ENCODE measurements at regions of chr15 and their contacts with region 1.

Region 1: DNA sequence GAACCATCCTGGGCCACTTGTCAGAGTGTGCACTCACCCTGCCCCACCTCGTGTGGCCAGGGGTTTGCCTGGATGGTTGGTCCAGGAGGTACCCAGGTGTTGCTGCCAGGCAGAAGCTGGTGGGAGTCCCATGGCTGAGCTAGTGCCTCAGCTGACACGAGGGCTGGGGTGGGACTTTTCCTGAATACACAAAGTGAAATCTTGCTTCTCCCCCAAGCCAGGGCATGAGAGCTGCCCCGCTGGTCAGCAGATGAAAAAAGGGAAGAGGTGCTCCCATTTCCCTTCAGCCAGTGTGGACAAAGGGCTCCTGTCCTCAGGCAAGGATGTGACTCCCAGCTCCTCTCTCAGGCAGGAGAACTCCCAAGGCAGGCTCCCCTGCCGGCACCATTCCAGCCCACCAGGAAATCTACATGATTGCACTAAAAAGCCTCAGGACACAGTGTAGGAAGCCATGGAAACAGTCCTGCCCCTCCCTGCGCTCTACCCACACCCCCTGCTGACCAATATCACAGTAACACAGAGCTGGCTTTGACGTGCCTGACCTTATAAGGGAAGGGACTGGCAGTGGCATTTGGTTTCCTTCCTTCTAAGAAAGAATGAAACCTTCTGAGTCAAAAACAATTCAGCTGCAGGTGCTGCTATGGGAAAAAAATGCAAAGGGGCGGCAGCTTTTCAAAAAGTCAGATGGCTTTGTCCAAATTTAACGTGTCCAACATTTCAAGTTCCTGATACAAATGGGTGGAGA is 33.9 kb downstream of the MYO5C start:
- DNase-seq: peak; percentile 86
- CTCF ChIP-seq: no peak

Region 2: DNA sequence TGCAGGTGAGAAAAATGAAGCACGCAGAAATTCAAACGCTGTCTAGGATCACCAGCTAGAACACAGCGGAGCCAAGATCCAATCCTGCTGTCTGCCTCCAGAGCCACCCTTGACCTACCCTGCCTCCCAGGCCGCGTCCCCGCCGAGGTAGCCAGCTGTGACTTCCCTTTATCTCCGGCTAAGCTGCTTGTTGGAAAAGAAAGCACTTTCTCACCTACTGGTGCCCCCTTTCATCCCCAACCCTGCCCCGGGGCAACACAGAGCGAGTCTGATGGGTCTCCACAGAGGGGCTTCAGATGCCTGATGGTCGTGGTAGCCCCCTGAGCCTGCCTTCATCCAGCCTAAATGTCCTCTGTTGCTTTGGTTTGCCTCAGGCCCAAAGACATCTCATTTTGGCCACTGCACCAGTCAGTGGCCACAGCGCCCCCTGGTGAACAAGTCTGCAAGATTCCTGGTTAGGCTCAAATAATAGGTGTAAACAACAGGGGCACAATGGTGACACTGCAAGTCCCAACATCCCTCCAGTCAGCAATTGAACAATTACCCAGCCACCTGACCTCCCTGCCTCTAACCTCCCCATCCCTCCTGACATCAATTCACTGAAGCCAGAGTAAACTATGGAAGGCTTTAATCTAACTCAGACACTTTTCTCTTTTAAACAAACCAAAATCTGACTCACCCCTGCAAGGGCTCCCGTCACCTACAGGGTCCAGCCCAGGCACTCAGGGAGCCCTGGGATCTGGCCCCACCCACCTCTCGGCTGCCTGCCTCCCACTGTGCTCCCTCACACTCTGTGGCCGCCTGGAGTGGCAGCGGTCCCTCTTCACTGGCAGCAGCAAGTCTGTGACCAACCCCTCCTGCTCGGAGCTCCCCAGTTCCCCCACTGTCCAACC is 121.8 kb before region 1 on chr15:
- CTCF ChIA-PET with region 1: no interaction called
- POLR2A ChIA-PET with region 1: no interaction called
- DNase-seq: peak; percentile 86
- CTCF ChIP-seq: peak; percentile 87

Region 3: DNA sequence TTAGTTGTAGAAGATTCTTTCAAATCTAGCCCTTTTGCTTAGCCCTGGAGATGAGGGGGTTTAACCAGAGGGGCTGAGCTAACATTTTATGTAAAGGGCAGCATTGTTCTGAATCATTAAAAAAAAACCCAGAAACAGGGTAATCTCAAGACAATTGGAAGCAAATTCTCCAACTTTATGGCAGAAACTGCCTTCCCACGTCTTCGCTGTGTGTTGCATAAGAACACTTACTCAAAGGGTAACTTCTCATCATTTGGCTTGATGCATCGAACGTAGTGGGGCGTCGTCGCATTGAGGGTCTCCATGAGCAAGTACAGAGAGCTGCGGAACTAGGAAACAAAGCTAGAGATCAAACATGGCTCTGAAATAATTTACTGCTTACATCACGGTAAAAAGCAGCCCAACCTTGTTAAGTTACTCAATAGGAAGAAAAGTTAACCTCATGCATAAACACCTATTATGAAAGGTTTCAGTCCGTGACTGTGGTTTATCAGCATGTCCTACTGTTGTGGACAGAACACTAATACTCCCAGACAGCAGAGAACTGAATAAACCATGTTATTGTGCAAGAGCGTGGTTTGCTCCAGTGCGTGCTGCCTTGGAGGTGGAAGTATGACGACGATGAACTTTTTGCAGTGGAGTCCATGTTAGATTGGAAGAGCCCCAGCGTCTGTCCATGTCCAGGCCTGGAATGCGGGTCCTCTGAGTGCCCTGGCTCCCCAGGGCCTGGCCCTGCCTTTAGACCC is 14.8 kb before region 1 on chr15:
- CTCF ChIA-PET with region 1: interaction called, 25 read pairs
- POLR2A ChIA-PET with region 1: no interaction called
- DNase-seq: no peak
- CTCF ChIP-seq: no peak

Region 4: GRCh38 chr15:52280326-52281084 is 18.8 kb after region 1 on chr15:
- CTCF ChIA-PET with region 1: interaction called, 48 read pairs
- POLR2A ChIA-PET with region 1: no interaction called
- DNase-seq: no peak
- CTCF ChIP-seq: no peak

Region 5: GRCh38 chr15:52735231-52736089 is 473.8 kb after region 1 on chr15:
- CTCF ChIA-PET with region 1: interaction called, 204 read pairs
- POLR2A ChIA-PET with region 1: no interaction called
- DNase-seq: peak; percentile 74
- CTCF ChIP-seq: peak; percentile 68

Measured in GM10248 (cell line).